GM23248 (cell line): ENCODE measurements at regions of chr13 and their contacts with region 1.

Region 1: DNA sequence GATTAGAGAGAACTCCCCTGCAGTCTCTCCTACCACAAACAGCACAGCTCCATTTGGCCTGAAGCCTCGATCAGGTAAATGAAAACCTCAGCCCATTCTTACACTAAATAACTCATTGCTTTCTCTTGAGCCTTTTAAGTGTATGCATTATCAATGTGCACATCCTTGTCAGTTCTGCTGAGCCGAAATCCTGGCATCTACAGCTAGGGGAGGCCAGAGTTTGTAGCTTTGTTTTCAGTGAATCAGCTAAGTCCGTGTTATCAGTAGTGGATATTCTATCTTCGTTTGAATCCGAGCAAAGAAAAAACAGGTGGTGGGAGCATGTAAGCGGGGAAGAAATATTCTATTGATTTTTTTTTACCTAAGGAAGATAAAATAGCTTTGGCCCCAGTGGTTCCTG is 84.4 kb downstream of the ESD start:
- DNase-seq: no peak
- H3K4me3 ChIP-seq: no peak overlapping the region
- H3K27ac ChIP-seq: no peak overlapping the region
- H3K4me1 ChIP-seq: no peaks in the 10 kb centered on the region
- H3K27me3 ChIP-seq: no peaks in the 10 kb centered on the region

Region 2: GRCh38 chr13:46530084-46530935 is 182.2 kb before region 1 on chr13:
- in situ Hi-C with region 1: no loop called
- DNase-seq: peak; percentile 67
- H3K4me3 ChIP-seq: no peak overlapping the region
- H3K27ac ChIP-seq: no peak overlapping the region
- H3K4me1 ChIP-seq: peaks cover 7% of the 10 kb centered on the region; the same call in 1 of the 2 replicates
- H3K27me3 ChIP-seq: peaks cover 5% of the 10 kb centered on the region; the same call in 1 of the 2 replicates

Region 3: DNA sequence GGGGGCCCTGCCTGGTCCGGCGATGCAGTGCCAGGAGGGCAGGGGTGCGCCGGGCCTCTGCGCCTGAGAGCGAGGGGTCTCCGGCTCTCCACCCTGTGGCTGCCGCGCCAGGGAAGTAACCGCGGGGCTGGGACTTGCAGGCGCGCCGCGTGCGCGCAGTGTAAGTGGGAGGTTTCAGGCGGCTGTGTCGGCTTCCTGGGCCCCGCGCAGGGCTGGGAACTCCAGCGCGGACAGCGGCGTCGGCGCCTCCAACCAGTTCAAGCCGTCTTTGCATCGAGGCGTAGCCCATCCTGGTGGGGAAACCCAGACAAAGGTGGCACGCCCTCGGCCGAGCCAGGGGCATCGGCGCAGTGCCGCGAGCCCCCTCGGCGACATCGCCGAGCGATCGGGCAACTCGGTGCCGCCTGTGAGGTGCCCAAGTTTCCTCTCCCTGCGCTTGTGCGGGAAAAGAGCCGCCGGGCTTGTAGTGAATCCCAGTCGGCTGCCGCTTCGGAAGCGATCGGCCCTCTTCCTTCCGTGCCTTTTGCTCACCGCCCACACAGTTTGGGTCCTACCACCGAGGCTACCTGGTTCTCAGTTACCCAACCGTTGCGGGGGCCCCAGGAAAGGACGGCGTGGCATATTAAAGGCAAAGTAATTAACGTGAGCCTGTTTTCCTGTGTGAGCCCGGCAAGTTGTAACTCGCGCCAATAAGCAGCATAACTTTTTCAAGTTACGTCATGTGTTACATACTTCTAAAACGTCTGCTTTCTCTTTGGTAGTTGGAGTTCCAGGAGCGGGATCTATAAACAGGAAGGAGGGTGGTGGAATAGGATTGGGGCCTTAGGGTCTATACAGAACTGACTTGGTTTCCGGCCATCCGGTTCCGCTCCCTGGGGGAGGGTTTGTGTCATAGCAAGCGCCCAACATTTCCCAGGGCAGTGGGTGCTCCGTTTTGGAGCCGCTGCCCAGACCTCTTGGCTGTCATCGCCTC is 158.4 kb before region 1 on chr13:
- in situ Hi-C with region 1: loop called (anchors 10 kb)
- DNase-seq: peak; percentile 91
- H3K4me3 ChIP-seq: peak overlapping the region; percentile 91
- H3K27ac ChIP-seq: peak overlapping the region; percentile 78
- H3K4me1 ChIP-seq: peaks cover 16% of the 10 kb centered on the region
- H3K27me3 ChIP-seq: no peaks in the 10 kb centered on the region

Region 4: DNA sequence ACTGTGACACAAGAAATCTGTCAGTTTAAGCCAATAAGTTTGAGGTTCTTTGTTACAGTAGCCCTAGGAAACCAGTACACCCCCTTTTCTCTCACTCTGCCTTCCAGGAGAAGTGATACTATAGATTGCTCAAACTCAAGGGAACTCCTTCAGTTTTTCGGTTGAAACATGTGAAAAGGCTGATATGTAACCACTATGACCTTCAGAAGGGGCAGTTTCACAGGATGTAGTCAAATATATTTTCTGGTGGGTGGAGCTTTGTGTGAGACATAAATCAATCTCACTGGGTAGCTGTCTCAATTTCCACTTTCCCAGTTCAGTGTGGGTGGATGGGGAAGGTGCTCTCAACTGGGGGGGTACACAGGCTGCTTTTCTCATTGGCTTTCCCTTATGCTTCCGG is 142.6 kb after region 1 on chr13:
- in situ Hi-C with region 1: no loop called
- DNase-seq: no peak
- H3K4me3 ChIP-seq: no peak overlapping the region
- H3K27ac ChIP-seq: no peak overlapping the region
- H3K4me1 ChIP-seq: peaks cover 5% of the 10 kb centered on the region; the same call in 1 of the 2 replicates
- H3K27me3 ChIP-seq: no peaks in the 10 kb centered on the region